ENCODE measurements at regions of chr3 and their contacts with region 1.

Region 1: DNA sequence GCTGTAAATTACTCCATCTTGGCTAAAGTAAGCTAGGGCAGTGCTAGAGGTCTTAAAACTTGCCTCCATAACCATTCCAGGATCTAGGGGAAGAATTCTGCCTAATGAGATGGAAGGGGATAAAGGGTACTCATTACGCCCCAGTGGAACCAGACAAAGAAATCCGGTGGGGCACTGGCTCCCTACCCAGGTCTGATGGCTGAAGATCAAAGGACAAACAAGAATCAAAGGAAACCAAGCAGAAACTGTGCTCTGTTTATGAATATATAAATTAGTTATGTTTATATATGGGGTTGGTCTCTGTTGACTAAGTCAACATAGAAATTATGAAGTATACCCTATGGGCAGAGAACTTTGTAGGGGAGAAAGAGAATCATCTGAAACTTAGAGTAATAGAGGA is 57.8 kb downstream of the NCEH1 start:
- DNase-seq: peak in 1 of 2 experiments; percentile 83
- H3K4me3 ChIP-seq: no peak overlapping the region
- H3K27ac ChIP-seq: peak overlapping the region; percentile 4
- H3K4me1 ChIP-seq: peaks cover 37% of the 10 kb centered on the region
- H3K27me3 ChIP-seq: no peaks in the 10 kb centered on the region
- CTCF ChIP-seq: no peak

Region 2: DNA sequence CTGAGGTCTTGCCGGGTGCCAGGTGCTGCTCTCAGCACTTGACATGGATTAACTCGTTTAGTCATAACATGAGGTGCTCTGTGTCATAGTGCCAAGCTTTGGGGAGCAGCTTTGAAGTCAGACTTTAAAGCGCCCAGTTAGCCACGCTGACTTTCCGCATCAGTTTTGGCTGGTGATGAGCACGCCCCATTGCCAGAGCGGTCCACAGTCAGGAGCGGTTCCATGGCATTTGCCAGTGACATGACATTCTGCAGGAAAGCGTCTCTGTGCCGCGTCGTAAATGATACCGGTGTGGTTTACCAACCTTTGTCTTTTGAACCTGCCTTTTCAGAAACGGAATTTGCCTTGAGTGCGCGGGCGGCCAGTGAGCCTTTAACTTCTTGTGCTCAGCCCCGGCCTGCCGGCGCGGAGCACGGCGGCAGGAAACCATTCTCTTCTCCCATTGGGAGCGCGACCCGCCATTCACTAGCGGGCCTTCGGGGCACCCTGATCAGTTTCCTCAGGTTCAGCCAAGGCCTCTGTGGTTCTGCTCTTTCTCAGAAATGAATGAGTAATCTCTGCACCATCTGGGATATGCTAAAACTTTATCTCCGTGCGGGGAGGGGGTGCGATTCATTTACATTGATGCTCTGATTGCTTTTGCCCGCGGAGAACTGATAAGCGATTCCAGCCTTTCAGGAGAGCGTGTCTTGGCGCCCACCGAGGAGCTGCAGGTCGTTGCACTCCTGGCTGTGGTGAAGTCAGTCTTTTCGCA is 1624.9 kb before region 1 on chr3:
- CTCF ChIA-PET with region 1: no interaction called
- POLR2A ChIA-PET with region 1: no interaction called
- intact Hi-C with region 1: no loop called
- DNase-seq: peak; percentile 61 to 76
- H3K4me3 ChIP-seq: peak overlapping the region; percentile 48; the same call in 1 of the 2 replicates
- H3K27ac ChIP-seq: peak overlapping the region; percentile 36
- H3K4me1 ChIP-seq: peaks cover 11% of the 10 kb centered on the region
- H3K27me3 ChIP-seq: no peaks in the 10 kb centered on the region
- CTCF ChIP-seq: no peak

Region 3: GRCh38 chr3:171514466-171514865 is 1138.6 kb before region 1 on chr3:
- CTCF ChIA-PET with region 1: no interaction called
- POLR2A ChIA-PET with region 1: no interaction called
- intact Hi-C with region 1: no loop called
- DNase-seq: no peak
- H3K4me3 ChIP-seq: no peak overlapping the region
- H3K27ac ChIP-seq: no peak overlapping the region
- H3K4me1 ChIP-seq: no peaks in the 10 kb centered on the region
- H3K27me3 ChIP-seq: no peaks in the 10 kb centered on the region
- CTCF ChIP-seq: peak; percentile 65

Region 4: GRCh38 chr3:172607305-172608121 is 45.6 kb before region 1 on chr3:
- CTCF ChIA-PET with region 1: no interaction called
- POLR2A ChIA-PET with region 1: interaction called, 18 read pairs
- intact Hi-C with region 1: no loop called
- DNase-seq: peak in 1 of 2 experiments; percentile 53
- H3K4me3 ChIP-seq: no peak overlapping the region
- H3K27ac ChIP-seq: no peak overlapping the region
- H3K4me1 ChIP-seq: 0 out of 2 replicates have a peak, but pooled peaks cover 7% of the 10 kb centered on the region
- H3K27me3 ChIP-seq: no peaks in the 10 kb centered on the region
- CTCF ChIP-seq: no peak